HepG2 (cell line): ENCODE measurements at regions of chr22 and their contacts with region 1.

Region 1: DNA sequence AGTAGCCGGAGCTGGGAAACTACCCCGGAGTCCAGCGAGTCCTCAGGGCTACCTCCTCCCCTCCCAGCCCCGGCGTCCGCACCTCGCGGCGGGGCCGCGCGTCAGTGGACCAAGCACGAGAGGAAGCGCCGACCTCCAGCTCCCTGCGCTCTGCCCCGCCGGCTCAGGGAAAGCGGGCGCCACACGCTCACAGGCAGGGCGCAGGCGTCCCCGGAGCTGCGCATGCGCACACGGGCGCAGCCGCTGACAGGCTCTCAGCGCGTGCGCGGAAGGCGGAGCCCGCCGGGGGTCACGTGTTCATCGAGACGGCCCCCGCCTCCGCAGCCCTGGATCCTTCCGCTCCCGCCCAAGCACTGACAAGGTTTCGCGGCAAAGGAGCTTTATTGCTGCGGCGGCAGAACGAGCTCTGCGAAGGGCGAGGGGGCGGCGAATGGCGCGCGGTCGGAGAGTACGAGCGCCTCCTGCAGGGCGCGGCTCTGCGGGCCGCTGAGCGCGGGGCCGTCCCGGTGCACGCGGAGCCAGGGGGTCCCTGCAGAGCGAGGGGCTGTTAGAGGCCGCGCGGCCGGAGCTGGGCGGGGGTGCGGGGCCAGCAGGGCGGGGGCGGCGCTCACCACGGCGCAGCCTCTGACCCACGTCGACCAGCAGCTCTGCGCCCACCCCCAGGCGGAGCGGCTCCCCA is at the start of gene SCO2:
- DNase-seq: peak; percentile 90
- ATAC-seq: peak; percentile 54
- H3K4me3 ChIP-seq: peak within 1 kb of the TSS; percentile 70 to 84 (median 83)
- H3K27ac ChIP-seq: peak within 1 kb of the TSS; percentile 94
- H3K4me1 ChIP-seq: peaks cover 53% of the 10 kb centered on the region
- H3K27me3 ChIP-seq: no peaks in the 10 kb centered on the region
- CTCF ChIP-seq: peak; percentile 64
- EP300 ChIP-seq: no peak
- POLR2A ChIP-seq: peak in 1 of 2 experiments; percentile 47; a peak in 1 of 4 replicates
- RAD21 ChIP-seq: peak; percentile 46
- total RNA-seq, gene SCO2: 2.1 and 3.7 TPM in 2 replicates

Region 2: DNA sequence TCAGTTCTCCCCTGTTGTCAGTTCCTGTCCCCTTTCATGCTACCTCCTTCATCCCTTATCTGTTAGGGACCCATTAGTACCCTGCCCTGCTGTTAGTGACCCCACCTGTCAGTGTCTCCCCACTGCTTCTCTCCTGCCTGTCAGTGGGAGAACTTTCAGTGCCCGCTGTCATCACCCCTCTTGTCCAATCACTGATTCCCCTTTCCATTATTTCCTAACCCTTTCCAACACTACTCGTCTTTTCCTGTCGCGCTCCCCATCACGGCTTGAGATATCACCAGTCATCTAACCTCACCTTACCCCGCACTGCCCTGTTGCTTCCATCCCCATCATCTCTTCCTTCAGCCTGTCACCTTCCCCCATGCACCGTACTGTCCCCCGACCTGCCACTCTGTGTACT is 178.4 kb before region 1 on chr22:
- CTCF ChIA-PET with region 1: no interaction called
- POLR2A ChIA-PET with region 1: no interaction called
- in situ Hi-C with region 1: no loop called
- intact Hi-C with region 1: no loop called
- DNase-seq: no peak
- ATAC-seq: no peak; the same call in 2 of the 3 replicates
- H3K4me3 ChIP-seq: no peak overlapping the region
- H3K27ac ChIP-seq: no peak overlapping the region
- H3K4me1 ChIP-seq: peaks cover 26% of the 10 kb centered on the region
- H3K27me3 ChIP-seq: no peaks in the 10 kb centered on the region
- CTCF ChIP-seq: no peak
- EP300 ChIP-seq: no peak
- POLR2A ChIP-seq: no peak
- RAD21 ChIP-seq: no peak

Region 3: GRCh38 chr22:50498322-50498890 is 27.1 kb before region 1 on chr22:
- CTCF ChIA-PET with region 1: no interaction called
- POLR2A ChIA-PET with region 1: interaction called, 15 read pairs
- in situ Hi-C with region 1: no loop called
- intact Hi-C with region 1: no loop called
- DNase-seq: peak; percentile 80
- ATAC-seq: peak; percentile 93
- H3K4me3 ChIP-seq: peak overlapping the region in 1 of 3 experiments; percentile 33; a peak in 2 of 6 replicates
- H3K27ac ChIP-seq: peak overlapping the region; percentile 61
- H3K4me1 ChIP-seq: peaks cover 32% of the 10 kb centered on the region
- H3K27me3 ChIP-seq: no peaks in the 10 kb centered on the region
- CTCF ChIP-seq: peak; percentile 90
- EP300 ChIP-seq: no peak
- POLR2A ChIP-seq: no peak
- RAD21 ChIP-seq: peak; percentile 55

Region 4: DNA sequence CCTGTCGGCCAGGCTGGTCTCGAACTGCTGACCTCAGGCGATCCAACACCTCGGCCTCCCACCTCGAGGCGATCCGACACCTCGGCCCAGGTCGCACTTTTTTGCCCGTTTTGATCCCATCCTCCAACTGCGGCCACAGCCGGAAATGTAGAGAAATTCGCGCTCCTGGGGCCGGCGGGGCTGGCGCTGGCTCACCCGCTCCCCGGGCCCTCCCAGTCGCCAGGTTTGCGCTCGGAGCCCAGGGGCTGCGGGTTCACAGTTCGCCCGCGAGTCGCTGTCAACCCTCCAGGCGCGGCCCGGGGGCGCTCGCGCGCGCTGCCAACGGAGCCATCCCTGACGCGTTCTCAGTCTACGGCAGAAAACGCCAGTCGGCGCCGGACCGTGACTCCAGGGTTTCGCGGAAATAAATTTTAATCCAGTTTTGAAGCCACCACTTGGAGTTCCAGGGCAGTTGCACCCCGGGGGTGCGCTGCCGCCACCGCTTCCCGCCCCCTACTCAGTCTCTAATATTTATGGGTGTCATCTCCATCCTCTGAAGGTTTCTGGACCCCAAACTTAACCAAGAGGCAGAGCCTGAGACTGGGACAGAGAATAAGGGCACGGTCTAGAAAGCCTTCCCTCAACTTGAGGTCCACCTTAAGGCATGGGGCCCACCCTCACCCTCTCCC is 18.7 kb after region 1 on chr22:
- CTCF ChIA-PET with region 1: no interaction called
- POLR2A ChIA-PET with region 1: interaction called, 34 read pairs
- in situ Hi-C with region 1: no loop called
- intact Hi-C with region 1: no loop called
- DNase-seq: no peak
- ATAC-seq: no peak
- H3K4me3 ChIP-seq: no peak overlapping the region
- H3K27ac ChIP-seq: no peak overlapping the region
- H3K4me1 ChIP-seq: peaks cover 35% of the 10 kb centered on the region
- H3K27me3 ChIP-seq: peaks cover 3 to 30% of the 10 kb centered on the region in 2 experiments
- CTCF ChIP-seq: no peak
- EP300 ChIP-seq: no peak
- POLR2A ChIP-seq: no peak
- RAD21 ChIP-seq: no peak

Region 5: GRCh38 chr22:50568599-50569001 is 43.1 kb after region 1 on chr22:
- CTCF ChIA-PET with region 1: no interaction called
- POLR2A ChIA-PET with region 1: interaction called, 36 read pairs
- in situ Hi-C with region 1: loop called (anchors 5 kb)
- intact Hi-C with region 1: loop called (anchors 5 kb)
- DNase-seq: peak; percentile 83
- ATAC-seq: peak; percentile 71
- H3K4me3 ChIP-seq: peak overlapping the region in 1 of 3 experiments; percentile 7; a peak in 1 of 6 replicates
- H3K27ac ChIP-seq: peak overlapping the region; percentile 83
- H3K4me1 ChIP-seq: peaks cover 39% of the 10 kb centered on the region
- H3K27me3 ChIP-seq: no peaks in the 10 kb centered on the region
- CTCF ChIP-seq: no peak
- EP300 ChIP-seq: peak in 1 of 2 experiments; percentile 29; a peak in 1 of 4 replicates
- POLR2A ChIP-seq: peak in 1 of 2 experiments; percentile 43; a peak in 1 of 4 replicates
- RAD21 ChIP-seq: no peak

Region 6: DNA sequence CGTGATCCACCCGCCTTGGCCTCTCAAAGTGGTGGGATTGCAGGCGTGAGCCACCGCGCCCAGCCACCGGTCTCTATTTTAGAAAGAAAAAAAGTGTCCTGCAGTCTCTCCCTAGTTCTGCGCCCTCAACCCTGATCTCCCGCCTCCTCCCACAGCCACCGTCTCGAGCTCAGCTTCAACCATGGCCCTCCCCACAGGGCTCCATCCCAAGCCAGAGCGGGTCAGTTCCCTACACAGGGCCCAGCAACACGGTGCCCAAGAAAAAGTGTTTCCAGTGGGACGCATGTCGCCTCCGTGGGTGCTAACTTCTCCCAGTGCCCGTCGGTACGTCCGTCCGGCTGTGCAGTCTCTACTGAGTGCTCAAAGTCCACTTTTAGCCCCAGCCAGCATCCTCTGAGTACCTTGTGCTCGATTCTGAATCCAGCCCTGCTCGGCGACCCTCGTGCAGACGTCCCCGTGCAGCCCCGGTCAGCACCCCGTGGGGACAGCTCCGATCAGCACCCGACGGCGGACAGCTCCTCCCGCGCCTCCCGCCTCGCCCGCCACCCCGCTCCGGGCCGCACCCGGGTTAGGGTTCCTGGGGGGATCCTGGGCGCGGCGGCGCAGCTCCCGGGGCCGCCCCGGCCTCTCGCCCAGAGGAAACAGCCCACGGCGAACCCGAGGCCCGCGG is 74.4 kb after region 1 on chr22:
- CTCF ChIA-PET with region 1: no interaction called
- POLR2A ChIA-PET with region 1: no interaction called
- in situ Hi-C with region 1: no loop called
- intact Hi-C with region 1: no loop called
- DNase-seq: peak; percentile 9
- ATAC-seq: peak; percentile 77
- H3K4me3 ChIP-seq: peak overlapping the region in 2 of 3 experiments; percentile 27 to 70; a peak in 3 of 6 replicates
- H3K27ac ChIP-seq: no peak overlapping the region
- H3K4me1 ChIP-seq: peaks cover 15% of the 10 kb centered on the region
- H3K27me3 ChIP-seq: peaks cover 0 to 2% of the 10 kb centered on the region in 2 experiments; a peak in 2 of 5 replicates
- CTCF ChIP-seq: 0 out of 2 replicates have a peak, but pooled peaks have one; percentile 12
- EP300 ChIP-seq: no peak
- POLR2A ChIP-seq: no peak
- RAD21 ChIP-seq: peak; percentile 32; the same call in 1 of the 2 replicates

Region 7: DNA sequence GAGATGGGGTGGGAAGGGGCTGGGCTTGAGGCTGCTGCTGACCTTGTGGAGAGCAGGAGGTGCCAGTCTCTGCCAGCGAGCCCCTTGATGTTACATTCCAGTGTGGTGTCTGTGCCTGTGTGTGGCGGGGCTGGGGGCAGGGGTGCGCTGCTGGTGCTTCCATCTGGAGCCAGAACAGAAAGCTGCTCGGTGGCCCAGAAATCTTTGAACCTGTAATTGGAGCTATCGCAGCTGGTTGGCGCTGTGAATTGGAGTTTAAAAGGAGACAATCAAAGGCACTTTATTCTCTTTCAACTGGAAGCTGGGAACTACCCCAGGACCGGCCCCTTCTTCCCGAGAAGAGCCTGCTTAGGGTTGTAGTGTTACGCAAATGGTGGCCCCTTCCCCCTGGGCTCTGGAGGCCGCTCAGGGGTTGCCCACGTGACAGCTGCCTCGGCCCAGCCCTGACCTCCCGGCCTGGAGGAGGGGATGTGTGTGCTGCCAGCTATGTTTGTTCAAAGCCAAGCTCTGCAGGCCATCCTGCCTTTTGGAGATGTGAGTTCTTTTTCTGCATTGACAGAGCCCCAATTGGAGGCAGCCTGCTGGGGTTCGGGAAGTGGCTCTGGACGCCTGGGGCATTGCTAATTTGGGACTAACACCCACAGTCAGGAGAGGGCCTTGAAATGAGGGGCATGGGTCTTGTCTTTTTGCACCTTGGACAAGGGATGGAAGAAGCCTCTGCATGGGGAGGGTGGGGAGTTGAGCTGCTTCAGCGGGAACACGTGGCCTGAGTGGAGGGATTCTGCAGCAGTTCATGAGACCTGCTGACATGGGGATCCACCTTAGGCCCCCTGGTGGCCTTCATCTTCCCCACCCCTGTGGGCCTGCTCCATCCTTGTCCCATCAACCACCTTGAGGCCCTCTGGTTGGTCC is 116.4 kb after region 1 on chr22:
- CTCF ChIA-PET with region 1: no interaction called
- POLR2A ChIA-PET with region 1: interaction called, 12 read pairs
- in situ Hi-C with region 1: no loop called
- intact Hi-C with region 1: no loop called
- DNase-seq: peak; percentile 95
- ATAC-seq: peak; percentile 86
- H3K4me3 ChIP-seq: peak overlapping the region; percentile 38 to 62 (median 38); a peak in 5 of 6 replicates
- H3K27ac ChIP-seq: peak overlapping the region; percentile 94
- H3K4me1 ChIP-seq: peaks cover 60% of the 10 kb centered on the region
- H3K27me3 ChIP-seq: no peaks in the 10 kb centered on the region
- CTCF ChIP-seq: peak; percentile 60
- EP300 ChIP-seq: peak; percentile 24 to 86; a peak in 3 of 4 replicates
- POLR2A ChIP-seq: peak; percentile 18 to 40; a peak in 2 of 4 replicates
- RAD21 ChIP-seq: peak; percentile 60